Activated CD4-positive, alpha-beta T cell treated with anti-CD3 and anti-CD28 coated beads for 36 hours (primary cell): ENCODE measurements at regions of chr7 and their contacts with region 1.

Region 1: GRCh38 chr7:99918959-99919813 is at the start of gene TRIM4:
- DNase-seq: peak; percentile 96
- ATAC-seq: peak; percentile 99
- H3K4me3 Mint-ChIP-seq: peak within 1 kb of the TSS; percentile 92
- H3K27ac Mint-ChIP-seq: peak within 1 kb of the TSS; percentile 95
- H3K4me1 Mint-ChIP-seq: peaks cover 33% of the 10 kb centered on the region
- H3K27me3 Mint-ChIP-seq: no peaks in the 10 kb centered on the region
- total RNA-seq, gene TRIM4: 23.9 to 25.7 TPM

Region 2: DNA sequence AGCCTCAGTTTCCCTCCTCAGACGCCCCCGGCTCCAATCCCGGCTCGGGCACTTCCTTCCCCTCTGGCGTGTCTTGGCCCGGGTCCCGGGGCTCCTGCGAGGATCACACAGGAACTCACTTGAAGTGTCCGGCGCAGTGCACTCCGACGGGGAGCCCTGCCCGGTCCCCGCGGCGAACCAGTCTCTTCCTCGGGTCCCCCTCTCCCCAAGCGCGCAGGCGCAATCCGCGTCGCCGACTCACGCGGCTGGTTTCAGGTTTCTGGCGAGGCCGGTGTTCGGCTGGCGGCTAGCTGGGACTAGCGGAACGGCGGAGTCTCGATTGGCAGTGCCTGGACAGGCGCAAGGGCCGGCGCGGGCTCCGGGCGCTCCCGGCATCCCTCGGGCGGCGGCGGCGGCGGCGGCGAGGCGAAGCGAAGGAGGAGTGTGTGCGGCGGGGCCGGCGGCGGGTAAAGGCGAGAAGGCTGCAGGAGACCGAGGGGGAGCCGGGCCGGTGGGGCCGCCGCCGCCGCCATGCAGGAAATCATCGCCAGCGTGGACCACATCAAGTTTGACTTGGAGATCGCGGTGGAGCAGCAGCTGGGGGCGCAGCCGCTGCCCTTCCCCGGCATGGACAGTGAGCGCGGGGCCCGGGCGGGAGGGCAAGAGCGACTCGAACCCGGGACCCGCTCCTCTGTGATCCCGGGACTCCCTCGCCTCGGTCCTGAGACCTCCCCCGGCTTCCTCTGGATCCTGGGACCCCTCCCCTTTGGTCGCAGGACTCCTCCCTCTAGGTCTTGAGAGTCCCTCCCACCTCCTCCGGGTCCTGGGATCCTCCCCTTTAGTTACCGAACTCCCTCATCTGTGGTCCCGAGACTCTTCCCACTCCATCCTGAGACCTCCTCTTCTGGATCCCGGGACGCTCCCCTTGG is 480.4 kb before region 1 on chr7 and contains the starts of genes CPSF4 and PTCD1:
- CTCF ChIA-PET with region 1: no interaction called
- POLR2A ChIA-PET with region 1: no interaction called
- intact Hi-C with region 1: loop called in 1 of 2 experiments (anchors 1 kb)
- DNase-seq: peak; percentile 96
- ATAC-seq: peak; percentile 93
- H3K4me3 Mint-ChIP-seq: peak within 1 kb of the TSS; percentile 91
- H3K27ac Mint-ChIP-seq: peak within 1 kb of the TSS; percentile 98
- H3K4me1 Mint-ChIP-seq: peaks cover 36% of the 10 kb centered on the region
- H3K27me3 Mint-ChIP-seq: no peaks in the 10 kb centered on the region
- total RNA-seq, gene CPSF4: 56.1 to 57.9 TPM
- total RNA-seq, gene PTCD1: 4.7 to 7.7 TPM

Region 3: GRCh38 chr7:99558306-99559174 is 360.6 kb before region 1 on chr7 and contains the start of gene ZNF655:
- CTCF ChIA-PET with region 1: interaction called, 3 read pairs
- POLR2A ChIA-PET with region 1: interaction called, 4 read pairs
- intact Hi-C with region 1: loop called in 1 of 2 experiments (anchors 2 kb)
- DNase-seq: peak; percentile 90
- ATAC-seq: peak; percentile 75
- H3K4me3 Mint-ChIP-seq: peak within 1 kb of the TSS; percentile 94
- H3K27ac Mint-ChIP-seq: peak within 1 kb of the TSS; percentile 96
- H3K4me1 Mint-ChIP-seq: peaks cover 49% of the 10 kb centered on the region
- H3K27me3 Mint-ChIP-seq: no peaks in the 10 kb centered on the region
- total RNA-seq, gene ZNF655: 51.1 to 52.0 TPM

Region 4: DNA sequence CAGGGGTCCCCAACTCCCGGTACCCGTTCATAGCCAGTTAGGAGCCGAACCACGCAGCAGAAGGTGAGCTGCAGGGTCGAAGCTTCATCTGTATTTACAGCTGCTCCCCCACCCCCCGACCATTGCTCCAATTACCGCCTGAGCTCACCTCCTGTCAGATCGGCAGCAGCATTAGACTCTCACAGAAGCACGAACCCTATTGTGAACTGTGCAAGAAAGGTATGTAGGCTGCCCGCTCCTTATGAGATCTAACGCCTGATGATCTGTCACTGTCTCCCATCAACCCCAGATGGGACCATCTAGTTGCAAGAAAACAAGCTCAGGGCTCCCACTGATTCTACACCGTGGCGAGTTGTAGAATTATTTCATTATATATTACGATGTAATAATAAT is 71.3 kb after region 1 on chr7:
- CTCF ChIA-PET with region 1: interaction called, 50 read pairs
- POLR2A ChIA-PET with region 1: no interaction called
- intact Hi-C with region 1: no loop called
- DNase-seq: no peak
- ATAC-seq: no peak
- H3K4me3 Mint-ChIP-seq: no peak overlapping the region
- H3K27ac Mint-ChIP-seq: no peak overlapping the region
- H3K4me1 Mint-ChIP-seq: no peaks in the 10 kb centered on the region
- H3K27me3 Mint-ChIP-seq: peaks cover 7% of the 10 kb centered on the region

Region 5: DNA sequence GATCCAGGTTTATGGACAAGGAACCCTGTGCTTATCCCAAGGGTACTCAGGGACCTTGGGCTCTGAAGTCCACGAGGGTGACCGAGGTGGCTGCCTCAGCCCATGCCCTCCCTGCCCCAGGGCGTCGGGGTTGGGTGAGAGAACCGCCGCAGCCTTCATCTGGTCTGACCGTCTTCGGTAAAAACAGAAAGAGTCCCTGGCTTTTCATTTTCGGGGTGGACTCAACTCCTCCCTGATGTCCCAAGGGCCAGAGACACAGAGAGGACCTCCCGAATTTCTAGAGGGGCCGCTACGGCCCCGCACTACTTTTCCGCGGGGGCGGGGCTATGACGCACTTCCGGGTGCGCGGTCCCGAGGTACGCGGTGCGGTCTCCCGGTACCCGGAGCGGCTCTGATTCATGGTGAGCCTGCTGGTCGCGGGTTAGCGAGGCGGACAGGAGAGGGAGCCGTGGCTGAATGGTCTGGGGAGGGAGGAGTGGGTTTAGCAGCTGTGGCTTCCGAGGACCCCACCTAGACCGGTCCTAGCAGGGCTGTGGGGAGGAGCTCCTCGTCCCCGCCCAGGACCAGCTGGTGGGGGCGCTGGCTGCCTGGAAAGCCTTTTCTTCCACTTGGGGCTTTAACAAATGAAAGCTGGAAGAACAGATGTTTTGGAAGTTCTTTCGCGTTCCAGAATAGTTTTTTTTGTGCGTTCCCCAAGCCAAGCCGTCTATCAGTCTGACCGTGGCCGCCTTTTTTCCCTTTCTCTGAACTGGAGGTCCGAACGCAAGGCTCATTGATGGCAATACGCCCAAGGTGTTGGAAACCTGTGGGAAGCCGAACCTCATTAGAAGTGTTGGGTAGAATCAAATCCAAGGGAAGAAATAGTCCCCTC is 130.5 kb after region 1 on chr7 and contains the start of gene ZSCAN21:
- CTCF ChIA-PET with region 1: interaction called, 12 read pairs
- POLR2A ChIA-PET with region 1: interaction called, 3 read pairs
- intact Hi-C with region 1: loop called in 1 of 2 experiments (anchors 1 kb)
- DNase-seq: peak; percentile 89
- ATAC-seq: peak; percentile 90
- H3K4me3 Mint-ChIP-seq: peak within 1 kb of the TSS; percentile 85
- H3K27ac Mint-ChIP-seq: peak within 1 kb of the TSS; percentile 86
- H3K4me1 Mint-ChIP-seq: peaks cover 17% of the 10 kb centered on the region
- H3K27me3 Mint-ChIP-seq: no peaks in the 10 kb centered on the region
- total RNA-seq, gene ZSCAN21: 6.4 to 7.4 TPM

Region 6: DNA sequence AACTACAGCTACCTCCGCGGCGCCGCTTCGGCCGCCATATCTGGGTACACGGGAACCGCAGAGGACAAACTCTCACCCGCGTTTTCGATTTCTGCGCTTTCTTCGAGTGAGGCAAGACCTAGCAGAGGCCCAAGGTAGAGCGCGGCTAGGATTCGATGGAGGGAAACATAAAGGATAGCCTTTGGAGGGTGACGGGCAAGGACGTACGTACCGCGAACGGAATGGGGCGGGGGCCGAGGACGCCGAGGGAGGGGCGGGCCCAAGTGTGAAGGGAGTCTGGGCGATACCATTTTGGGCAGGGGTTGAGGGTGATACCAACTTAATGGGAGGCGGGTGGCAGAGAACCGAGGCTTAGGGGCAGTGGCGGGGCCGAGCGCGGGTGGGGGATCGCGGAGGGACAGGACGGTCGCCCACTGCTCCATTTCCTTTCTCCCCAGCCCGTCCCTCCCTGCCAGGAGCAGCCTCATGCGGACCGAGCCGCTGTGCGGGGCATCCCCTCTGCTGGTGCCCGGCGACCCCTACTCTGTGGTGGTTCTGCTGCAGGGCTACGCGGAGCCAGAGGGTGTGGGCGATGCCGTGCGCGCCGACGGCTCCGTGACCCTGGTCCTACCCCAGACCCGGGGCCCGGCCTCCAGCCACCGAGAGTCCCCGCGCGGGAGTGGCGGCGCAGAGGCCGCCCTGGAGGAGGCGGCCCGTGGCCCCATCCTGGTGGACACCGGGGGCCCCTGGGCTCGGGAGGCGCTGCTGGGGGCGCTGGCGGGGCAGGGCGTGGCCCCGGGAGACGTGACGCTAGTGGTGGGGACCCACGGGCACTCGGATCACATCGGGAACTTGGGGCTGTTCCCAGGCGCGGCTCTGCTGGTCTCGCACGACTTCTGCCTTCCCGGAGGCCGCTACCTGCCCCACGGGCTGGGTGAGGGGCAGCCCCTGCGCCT is 208.0 kb after region 1 on chr7 and contains the start of gene MBLAC1:
- CTCF ChIA-PET with region 1: interaction called, 11 read pairs
- POLR2A ChIA-PET with region 1: no interaction called
- intact Hi-C with region 1: loop called (anchors 1 to 5 kb)
- DNase-seq: peak; percentile 95
- ATAC-seq: peak; percentile 74
- H3K4me3 Mint-ChIP-seq: peak within 1 kb of the TSS; percentile 93
- H3K27ac Mint-ChIP-seq: peak within 1 kb of the TSS; percentile 99
- H3K4me1 Mint-ChIP-seq: peaks cover 28% of the 10 kb centered on the region
- H3K27me3 Mint-ChIP-seq: no peaks in the 10 kb centered on the region
- total RNA-seq, gene MBLAC1: 1.6 to 2.2 TPM